Activated CD4-positive, alpha-beta T cell treated with anti-CD3 and anti-CD28 coated beads for 36 hours (primary cell): ENCODE measurements at regions of chr11 and their contacts with region 1.

Region 1: DNA sequence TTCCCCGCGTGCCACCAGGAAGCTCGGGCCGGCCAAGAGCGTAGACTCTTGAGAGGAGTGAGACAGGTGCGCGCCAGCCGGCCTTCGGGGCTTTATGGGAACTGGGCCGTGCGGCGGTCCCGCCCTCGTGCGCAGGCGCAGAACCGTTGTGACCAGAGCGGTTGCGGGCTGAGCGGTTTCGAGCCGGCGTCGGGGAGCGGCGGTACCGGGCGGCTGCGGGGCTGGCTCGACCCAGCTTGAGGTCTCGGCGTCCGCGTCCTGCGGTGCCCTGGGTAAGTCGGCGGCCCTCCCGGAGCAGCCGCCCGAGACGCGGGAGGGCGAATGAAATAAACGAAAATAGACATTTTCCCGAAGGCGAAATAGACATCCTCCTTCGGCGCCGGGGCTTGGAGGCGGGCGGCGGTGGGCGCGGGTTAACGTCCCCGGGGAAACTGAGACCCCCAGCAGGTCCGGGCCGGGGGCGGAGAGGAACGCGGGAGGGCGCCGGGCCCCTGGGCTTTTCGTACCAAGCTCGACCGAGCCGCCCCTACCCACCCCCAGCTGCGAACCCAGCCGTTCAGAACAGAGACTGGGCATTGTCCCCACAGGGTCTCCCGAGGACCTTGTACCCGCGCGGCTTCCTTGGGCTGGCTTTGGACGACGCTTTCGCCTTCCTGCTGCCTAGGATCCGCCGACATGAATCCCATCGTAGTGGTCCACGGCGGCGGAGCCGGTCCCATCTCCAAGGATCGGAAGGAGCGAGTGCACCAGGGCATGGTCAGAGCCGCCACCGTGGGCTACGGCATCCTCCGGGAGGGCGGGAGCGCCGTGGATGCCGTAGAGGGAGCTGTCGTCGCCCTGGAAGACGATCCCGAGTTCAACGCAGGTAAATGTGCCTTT is at the start of gene ASRGL1:
- DNase-seq: peak; percentile 77
- ATAC-seq: peak; percentile 76
- H3K4me3 Mint-ChIP-seq: peak within 1 kb of the TSS; percentile 68
- H3K27ac Mint-ChIP-seq: peak within 1 kb of the TSS; percentile 49
- H3K4me1 Mint-ChIP-seq: peaks cover 5% of the 10 kb centered on the region
- H3K27me3 Mint-ChIP-seq: peaks cover 34% of the 10 kb centered on the region
- total RNA-seq, gene ASRGL1: 1.2 to 1.3 TPM

Region 2: GRCh38 chr11:61711498-61711897 is 626.0 kb before region 1 on chr11:
- CTCF ChIA-PET with region 1: no interaction called
- POLR2A ChIA-PET with region 1: no interaction called
- intact Hi-C with region 1: no loop called
- DNase-seq: no peak
- ATAC-seq: no peak
- H3K4me3 Mint-ChIP-seq: no peak overlapping the region
- H3K27ac Mint-ChIP-seq: no peak overlapping the region
- H3K4me1 Mint-ChIP-seq: no peaks in the 10 kb centered on the region
- H3K27me3 Mint-ChIP-seq: no peaks in the 10 kb centered on the region

Region 3: GRCh38 chr11:62324738-62325556 is 12.6 kb before region 1 on chr11:
- CTCF ChIA-PET with region 1: interaction called, 13 read pairs
- POLR2A ChIA-PET with region 1: no interaction called
- intact Hi-C with region 1: no loop called
- DNase-seq: peak; percentile 87
- ATAC-seq: peak; percentile 98
- H3K4me3 Mint-ChIP-seq: no peak overlapping the region
- H3K27ac Mint-ChIP-seq: no peak overlapping the region
- H3K4me1 Mint-ChIP-seq: peaks cover 3% of the 10 kb centered on the region
- H3K27me3 Mint-ChIP-seq: peaks cover 17% of the 10 kb centered on the region

Region 4: GRCh38 chr11:62353844-62354243 is 16.3 kb after region 1 on chr11:
- CTCF ChIA-PET with region 1: interaction called, 14 read pairs
- POLR2A ChIA-PET with region 1: no interaction called
- intact Hi-C with region 1: no loop called
- DNase-seq: no peak
- ATAC-seq: no peak
- H3K4me3 Mint-ChIP-seq: no peak overlapping the region
- H3K27ac Mint-ChIP-seq: no peak overlapping the region
- H3K4me1 Mint-ChIP-seq: peaks cover 11% of the 10 kb centered on the region
- H3K27me3 Mint-ChIP-seq: no peaks in the 10 kb centered on the region

Region 5: DNA sequence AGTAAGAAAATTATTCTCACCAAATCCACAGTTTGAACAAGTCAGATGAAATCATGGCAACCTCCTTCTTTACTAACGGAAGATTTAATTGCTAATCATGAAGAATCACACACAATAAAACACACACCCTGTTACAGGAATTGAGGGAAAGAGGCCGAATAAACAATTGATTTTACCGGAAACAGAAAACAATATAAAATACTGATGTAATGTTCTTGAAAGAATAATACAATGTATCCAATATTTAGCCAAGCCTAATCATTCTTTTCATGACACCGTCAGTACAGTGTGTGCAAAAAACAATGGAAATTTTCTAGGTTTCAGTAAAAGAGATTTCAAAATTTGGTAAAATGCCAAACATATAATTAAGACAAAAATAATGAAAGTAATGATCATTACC is 23.1 kb after region 1 on chr11:
- CTCF ChIA-PET with region 1: interaction called, 12 read pairs
- POLR2A ChIA-PET with region 1: no interaction called
- intact Hi-C with region 1: no loop called
- DNase-seq: no peak
- ATAC-seq: no peak
- H3K4me3 Mint-ChIP-seq: no peak overlapping the region
- H3K27ac Mint-ChIP-seq: no peak overlapping the region
- H3K4me1 Mint-ChIP-seq: no peaks in the 10 kb centered on the region
- H3K27me3 Mint-ChIP-seq: no peaks in the 10 kb centered on the region

Region 6: GRCh38 chr11:62370743-62371440 is 33.4 kb after region 1 on chr11:
- CTCF ChIA-PET with region 1: interaction called, 10 read pairs
- POLR2A ChIA-PET with region 1: no interaction called
- intact Hi-C with region 1: loop called in 1 of 2 experiments (anchors 2 kb)
- DNase-seq: peak; percentile 78
- ATAC-seq: peak; percentile 94
- H3K4me3 Mint-ChIP-seq: peak overlapping the region; percentile 58
- H3K27ac Mint-ChIP-seq: peak overlapping the region; percentile 94
- H3K4me1 Mint-ChIP-seq: peaks cover 7% of the 10 kb centered on the region
- H3K27me3 Mint-ChIP-seq: no peaks in the 10 kb centered on the region

Region 7: DNA sequence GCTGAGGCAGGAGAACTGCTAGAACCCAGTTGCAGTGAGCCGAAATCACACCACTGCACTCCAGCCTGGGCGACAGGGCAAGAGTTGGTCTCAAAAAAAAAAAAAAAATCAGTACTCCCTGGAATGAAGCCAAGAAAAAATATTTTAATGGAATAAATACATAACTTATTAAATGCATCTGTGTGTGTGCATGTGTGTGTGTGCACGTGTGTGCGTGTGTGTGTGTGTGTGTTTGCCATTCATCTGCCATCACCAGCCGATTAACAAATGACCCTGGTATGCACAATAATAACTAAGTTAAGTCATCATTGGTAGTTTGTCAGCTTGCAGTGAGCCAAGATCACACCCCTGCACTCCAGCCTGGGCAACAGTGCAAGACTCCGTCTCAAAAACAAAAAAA is 46.3 kb after region 1 on chr11:
- CTCF ChIA-PET with region 1: interaction called, 12 read pairs
- POLR2A ChIA-PET with region 1: no interaction called
- intact Hi-C with region 1: no loop called
- DNase-seq: no peak
- ATAC-seq: no peak
- H3K4me3 Mint-ChIP-seq: no peak overlapping the region
- H3K27ac Mint-ChIP-seq: no peak overlapping the region
- H3K4me1 Mint-ChIP-seq: peaks cover 10% of the 10 kb centered on the region
- H3K27me3 Mint-ChIP-seq: no peaks in the 10 kb centered on the region

Region 8: DNA sequence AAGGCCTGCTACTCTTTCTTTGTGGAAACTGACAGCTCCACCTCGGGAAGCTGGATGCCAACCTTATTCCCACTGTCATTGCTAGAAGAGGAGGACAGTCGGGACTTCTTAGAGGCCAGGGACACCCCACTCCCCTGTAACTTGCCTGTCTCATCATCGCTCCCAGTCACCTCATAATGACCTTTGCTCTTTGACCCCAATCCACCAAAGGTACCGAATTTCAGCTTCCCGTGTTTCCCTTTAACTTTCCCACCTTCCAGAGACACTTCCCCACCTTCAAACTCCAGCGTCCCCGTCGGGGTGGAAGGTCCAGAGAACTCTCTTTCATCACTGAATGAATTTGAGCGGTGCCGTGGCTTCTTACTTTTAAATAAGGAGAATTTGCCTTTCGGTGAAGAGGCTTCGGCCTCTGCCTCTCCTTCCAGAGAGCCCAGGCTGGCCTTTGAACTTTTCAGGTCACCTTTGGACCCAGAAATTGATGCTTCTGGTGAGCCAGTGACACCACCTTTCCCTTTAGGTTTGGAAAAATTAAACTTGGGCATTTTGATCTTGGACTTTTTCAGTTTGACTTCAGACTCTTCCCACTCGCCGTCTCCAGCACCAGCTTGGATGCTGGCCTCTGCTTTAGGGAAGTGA is 179.3 kb after region 1 on chr11:
- CTCF ChIA-PET with region 1: no interaction called
- POLR2A ChIA-PET with region 1: no interaction called
- intact Hi-C with region 1: no loop called
- DNase-seq: no peak
- ATAC-seq: no peak
- H3K4me3 Mint-ChIP-seq: no peak overlapping the region
- H3K27ac Mint-ChIP-seq: no peak overlapping the region
- H3K4me1 Mint-ChIP-seq: no peaks in the 10 kb centered on the region
- H3K27me3 Mint-ChIP-seq: no peaks in the 10 kb centered on the region